ENCODE measurements at regions of chr6 and their contacts with region 1.

Region 1: DNA sequence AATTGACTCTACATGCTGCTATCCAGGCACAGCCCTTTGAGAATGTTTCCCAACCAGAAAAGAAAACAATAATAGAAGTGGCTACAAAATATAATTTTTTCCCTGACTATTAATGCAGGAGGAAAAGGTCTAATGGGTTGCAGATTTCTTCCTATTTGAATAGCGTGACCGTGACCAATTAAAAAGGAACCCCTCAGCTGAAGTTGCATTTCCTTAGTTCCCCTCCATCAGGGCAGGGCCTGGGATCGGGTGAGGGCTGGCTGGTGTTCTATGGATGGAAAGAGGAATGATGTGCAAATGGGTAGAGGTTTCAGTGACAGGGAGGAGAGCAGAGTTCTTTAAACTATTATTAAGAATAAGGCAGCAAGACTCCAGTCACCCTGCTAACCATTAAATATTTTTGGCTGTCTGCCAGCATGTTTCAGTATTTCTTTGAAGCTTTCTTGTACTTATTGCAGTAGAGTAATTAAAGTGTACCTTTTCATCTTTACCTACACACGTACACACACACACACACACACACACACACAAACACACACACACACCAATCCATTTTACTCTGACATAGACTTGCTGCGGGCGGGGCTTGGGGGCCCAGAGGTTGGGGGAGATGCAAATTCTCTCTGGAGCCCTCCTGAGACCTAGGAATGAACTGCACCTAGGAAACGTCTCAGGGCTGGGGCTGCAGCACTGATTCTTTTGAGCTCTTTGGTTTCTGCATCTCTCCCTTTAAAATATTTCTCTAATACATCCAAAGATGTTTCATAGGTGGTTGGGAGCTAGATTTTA is 154.8 kb upstream of the SLC35B3 start:
- DNase-seq: peak; percentile 15
- ATAC-seq: no peak
- H3K4me3 ChIP-seq: no peak overlapping the region
- H3K27ac ChIP-seq: no peak overlapping the region
- H3K4me1 ChIP-seq: no peaks in the 10 kb centered on the region
- H3K27me3 ChIP-seq: no peaks in the 10 kb centered on the region
- CTCF ChIP-seq: peak; percentile 35; the same call in 1 of the 2 replicates

Region 2: DNA sequence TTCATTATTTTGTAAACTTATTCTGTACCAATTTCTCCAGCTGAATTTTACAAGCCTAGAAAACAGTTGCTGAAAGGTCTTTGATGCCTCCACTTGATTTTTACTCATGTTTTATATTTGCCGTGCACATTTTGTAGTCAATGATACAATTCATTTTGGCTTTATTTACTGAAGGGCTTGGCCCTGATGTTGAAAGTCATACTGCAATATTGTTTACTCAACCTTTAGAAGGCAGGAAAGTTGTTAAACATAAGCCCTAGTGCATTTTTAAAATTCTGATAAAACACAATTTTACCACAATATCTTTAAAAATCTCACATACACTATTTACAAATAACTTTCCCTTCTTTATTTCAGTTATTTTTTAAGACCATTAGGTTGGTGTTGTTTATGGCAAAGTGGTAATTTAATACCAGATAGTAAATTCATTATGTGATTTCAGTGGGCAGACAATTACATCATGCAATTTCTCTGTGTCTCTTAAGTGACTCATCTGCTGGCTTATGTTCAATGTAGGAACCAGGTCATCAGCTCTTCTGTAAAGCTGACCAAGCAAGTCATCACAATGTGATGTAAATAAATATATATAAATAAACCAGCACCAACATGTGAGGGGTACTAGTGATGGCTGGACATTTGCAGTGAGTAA is 33.6 kb before region 1 on chr6:
- CTCF ChIA-PET with region 1: no interaction called
- POLR2A ChIA-PET with region 1: no interaction called
- intact Hi-C with region 1: loop called (anchors 2 kb)
- DNase-seq: peak; percentile 84
- ATAC-seq: peak; percentile 85
- H3K4me3 ChIP-seq: no peak overlapping the region
- H3K27ac ChIP-seq: peak overlapping the region; percentile 33; the same call in 1 of the 2 replicates
- H3K4me1 ChIP-seq: peaks cover 23% of the 10 kb centered on the region
- H3K27me3 ChIP-seq: no peaks in the 10 kb centered on the region
- CTCF ChIP-seq: no peak

Region 3: GRCh38 chr6:8570256-8570920 is 19.7 kb before region 1 on chr6:
- CTCF ChIA-PET with region 1: no interaction called
- POLR2A ChIA-PET with region 1: no interaction called
- intact Hi-C with region 1: no loop called
- DNase-seq: no peak
- ATAC-seq: no peak
- H3K4me3 ChIP-seq: no peak overlapping the region
- H3K27ac ChIP-seq: no peak overlapping the region
- H3K4me1 ChIP-seq: no peaks in the 10 kb centered on the region
- H3K27me3 ChIP-seq: 0 out of 2 replicates have a peak, but pooled peaks cover 4% of the 10 kb centered on the region
- CTCF ChIP-seq: no peak

Region 4: GRCh38 chr6:8608737-8609136 is 18.6 kb after region 1 on chr6:
- CTCF ChIA-PET with region 1: no interaction called
- POLR2A ChIA-PET with region 1: no interaction called
- intact Hi-C with region 1: no loop called
- DNase-seq: no peak
- ATAC-seq: no peak
- H3K4me3 ChIP-seq: no peak overlapping the region
- H3K27ac ChIP-seq: no peak overlapping the region
- H3K4me1 ChIP-seq: no peaks in the 10 kb centered on the region
- H3K27me3 ChIP-seq: peaks cover 30% of the 10 kb centered on the region; the same call in 1 of the 2 replicates
- CTCF ChIP-seq: no peak